Activated naive CD4-positive, alpha-beta T cell treated with anti-CD3 and anti-CD28 coated beads, Interleukin-2, amount 10 ng/mL, durations not matched to agents 7 days and 5 days (primary cell): ENCODE measurements at regions of chr11 and their contacts with region 1.

Region 1: GRCh38 chr11:112555491-112556364 is 295.1 kb upstream of the PLET1 start:
- DNase-seq: peak; percentile 81
- H3K4me3 Mint-ChIP-seq: no peak overlapping the region
- H3K27ac Mint-ChIP-seq: peak overlapping the region; percentile 21
- H3K4me1 Mint-ChIP-seq: peaks cover 4% of the 10 kb centered on the region
- H3K27me3 Mint-ChIP-seq: peaks cover 5% of the 10 kb centered on the region

Region 2: DNA sequence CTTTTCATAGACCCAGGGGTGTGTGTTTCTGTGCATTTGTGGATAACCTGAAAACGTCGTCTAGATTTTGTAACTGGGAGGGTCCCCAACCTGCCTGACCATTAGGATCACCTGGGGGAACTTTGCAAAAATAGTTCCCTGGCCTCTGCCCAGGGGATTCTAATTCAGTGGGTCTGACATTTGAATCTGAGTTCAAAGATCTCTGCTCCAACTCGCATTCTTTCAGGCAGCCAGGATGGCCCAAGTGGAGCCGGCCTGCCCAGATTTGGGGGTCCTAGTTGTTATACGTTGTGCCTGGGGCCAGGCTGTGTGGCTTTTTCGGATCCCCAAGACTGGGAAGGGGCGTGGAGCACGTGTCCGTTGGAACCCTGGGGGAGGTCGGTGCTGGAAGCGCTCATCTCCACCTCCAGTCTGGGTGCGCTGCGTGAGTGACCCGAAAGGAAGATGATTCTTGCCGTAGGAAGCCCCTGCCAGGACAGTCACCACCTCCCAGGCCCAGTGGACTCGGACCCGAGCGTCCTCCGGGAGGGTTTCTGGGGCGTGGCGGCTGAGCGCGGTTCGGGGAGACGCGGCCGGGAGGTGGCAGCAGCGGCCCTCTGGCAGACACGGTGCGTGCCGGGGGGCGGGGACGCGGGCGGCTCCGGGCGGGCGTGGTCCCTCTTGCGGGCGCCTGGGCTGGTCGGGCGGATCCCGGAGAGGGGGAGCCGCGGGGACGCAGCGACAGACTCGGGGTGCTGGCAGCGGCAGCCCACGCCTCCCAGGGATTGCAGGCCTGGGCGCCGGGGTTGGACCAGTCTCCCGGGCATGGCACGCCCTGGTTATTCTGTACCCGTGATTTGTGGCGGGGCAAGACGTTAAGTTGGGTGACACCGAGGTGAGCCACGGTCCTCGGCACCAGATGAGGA is 265.9 kb before region 1 on chr11:
- CTCF ChIA-PET with region 1: interaction called, 26 read pairs
- DNase-seq: peak; percentile 89
- H3K4me3 Mint-ChIP-seq: peak overlapping the region; percentile 63
- H3K27ac Mint-ChIP-seq: peak overlapping the region; percentile 56
- H3K4me1 Mint-ChIP-seq: peaks cover 36% of the 10 kb centered on the region
- H3K27me3 Mint-ChIP-seq: peaks cover 6% of the 10 kb centered on the region

Region 3: DNA sequence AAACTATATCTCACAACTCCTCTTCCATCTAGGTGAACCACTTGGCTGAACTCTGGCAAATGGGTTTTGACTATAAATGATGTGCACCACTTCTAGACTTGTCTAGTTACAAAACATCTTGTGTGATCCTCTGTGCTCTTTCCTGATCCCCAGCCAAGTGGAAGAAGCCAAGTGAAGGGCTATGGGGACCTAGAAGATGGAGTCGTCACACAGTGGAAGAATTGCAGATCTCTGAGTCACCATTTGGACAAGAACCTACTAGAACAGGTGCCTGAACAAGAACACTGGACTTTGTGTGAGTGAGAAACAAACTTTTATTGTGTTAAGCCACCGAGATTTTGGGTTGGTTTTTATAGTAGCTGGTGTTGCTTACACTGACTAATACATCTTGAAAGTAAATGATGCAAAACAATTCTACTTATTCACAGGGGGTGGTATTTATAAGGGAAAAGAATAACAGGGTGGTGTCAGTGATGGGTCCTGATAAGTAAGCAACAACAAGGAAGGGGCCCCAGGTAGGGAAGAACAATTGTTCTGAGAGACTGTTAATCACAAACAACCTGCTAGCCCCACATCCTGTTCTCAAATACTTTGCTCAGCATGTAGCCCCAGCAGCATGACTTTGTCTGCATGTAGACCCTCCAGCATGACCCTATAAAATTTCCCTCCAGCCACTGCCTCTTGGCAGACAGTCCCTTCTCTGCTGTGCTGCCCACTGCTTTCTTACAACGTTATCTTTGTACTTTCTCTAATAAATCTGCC is 14.4 kb before region 1 on chr11:
- CTCF ChIA-PET with region 1: interaction called, 10 read pairs
- DNase-seq: no peak
- H3K4me3 Mint-ChIP-seq: no peak overlapping the region
- H3K27ac Mint-ChIP-seq: no peak overlapping the region
- H3K4me1 Mint-ChIP-seq: peaks cover 6% of the 10 kb centered on the region
- H3K27me3 Mint-ChIP-seq: peaks cover 5% of the 10 kb centered on the region

Region 4: GRCh38 chr11:112570333-112570732 is 14.6 kb after region 1 on chr11:
- CTCF ChIA-PET with region 1: no interaction called
- DNase-seq: no peak
- H3K4me3 Mint-ChIP-seq: no peak overlapping the region
- H3K27ac Mint-ChIP-seq: no peak overlapping the region
- H3K4me1 Mint-ChIP-seq: no peaks in the 10 kb centered on the region
- H3K27me3 Mint-ChIP-seq: peaks cover 8% of the 10 kb centered on the region